T-cell (primary cell): ENCODE measurements at regions of chr7 and their contacts with region 1.

Region 1: GRCh38 chr7:149662591-149663095 is 110.7 kb downstream of the ZNF467 start:
- DNase-seq: peak; percentile 10 to 71 (median 50)
- ATAC-seq: peak; percentile 66 to 79 (median 71)
- H3K4me3 ChIP-seq: no peak overlapping the region
- H3K4me3 Mint-ChIP-seq: no peak overlapping the region
- H3K27ac ChIP-seq: no peak overlapping the region
- H3K27ac Mint-ChIP-seq: no peak overlapping the region
- H3K4me1 ChIP-seq: no peaks in the 10 kb centered on the region
- H3K4me1 Mint-ChIP-seq: no peaks in the 10 kb centered on the region
- H3K27me3 ChIP-seq: peaks cover 0 to 14% of the 10 kb centered on the region in 2 experiments
- H3K27me3 Mint-ChIP-seq: peaks cover 45 to 48% of the 10 kb centered on the region in 2 donors

Region 2: DNA sequence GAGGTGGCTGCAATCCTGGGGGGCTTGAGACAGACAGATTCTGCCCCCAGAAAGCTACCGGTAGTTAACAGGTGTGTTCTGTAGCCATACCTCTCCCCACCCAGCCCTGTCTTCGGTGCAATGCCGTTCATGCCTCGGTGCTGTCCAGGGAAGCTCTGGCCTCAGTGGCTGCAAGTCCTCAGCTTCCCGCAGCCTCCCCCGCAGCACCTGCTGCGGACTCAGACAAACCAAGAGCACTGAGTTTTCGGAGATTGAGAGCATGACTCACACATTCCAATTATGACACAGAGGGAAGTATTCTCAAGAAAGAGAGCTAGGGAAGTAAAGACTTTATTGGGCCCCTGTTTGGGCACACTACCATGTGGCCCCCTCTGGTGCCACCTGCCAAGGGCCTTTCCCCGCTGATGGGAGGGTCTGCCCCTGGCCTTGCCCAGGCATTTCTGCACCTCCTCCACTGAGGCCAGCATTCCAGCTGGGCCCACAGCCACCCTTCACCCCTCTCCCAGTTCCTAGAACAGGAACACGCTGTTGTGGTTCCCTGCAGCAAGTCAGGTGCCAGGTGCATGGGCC is 748.4 kb before region 1 on chr7:
- CTCF ChIA-PET with region 1: no interaction called
- POLR2A ChIA-PET with region 1: no interaction called
- DNase-seq: peak in 2 of 35 experiments; percentile 9 to 14
- ATAC-seq: peak in 3 of 4 experiments; percentile 27 to 35 (median 28)
- H3K4me3 ChIP-seq: no peak overlapping the region
- H3K4me3 Mint-ChIP-seq: peak overlapping the region; percentile 34 to 77 (median 44)
- H3K27ac ChIP-seq: peak overlapping the region; percentile 66
- H3K27ac Mint-ChIP-seq: peak overlapping the region; percentile 77 to 86
- H3K4me1 ChIP-seq: peaks cover 38 to 39% of the 10 kb centered on the region in 2 experiments
- H3K4me1 Mint-ChIP-seq: peaks cover 50 to 61% (median 53%) of the 10 kb centered on the region in 3 donors
- H3K27me3 ChIP-seq: peaks cover 0 to 3% of the 10 kb centered on the region in 2 experiments
- H3K27me3 Mint-ChIP-seq: no peaks in the 10 kb centered on the region

Region 3: GRCh38 chr7:149686002-149686401 is 23.4 kb after region 1 on chr7:
- CTCF ChIA-PET with region 1: no interaction called
- POLR2A ChIA-PET with region 1: no interaction called
- DNase-seq: no peak
- ATAC-seq: no peak
- H3K4me3 ChIP-seq: no peak overlapping the region
- H3K4me3 Mint-ChIP-seq: no peak overlapping the region
- H3K27ac ChIP-seq: no peak overlapping the region
- H3K27ac Mint-ChIP-seq: no peak overlapping the region
- H3K4me1 ChIP-seq: no peaks in the 10 kb centered on the region
- H3K4me1 Mint-ChIP-seq: peaks cover 0 to 4% (median 0%) of the 10 kb centered on the region in 3 donors
- H3K27me3 ChIP-seq: peaks cover 12 to 20% of the 10 kb centered on the region in 2 experiments
- H3K27me3 Mint-ChIP-seq: peaks cover 60 to 64% of the 10 kb centered on the region in 2 donors

Region 4: GRCh38 chr7:149742075-149742701 is 79.5 kb after region 1 on chr7:
- CTCF ChIA-PET with region 1: interaction called, 6 to 19 read pairs
- POLR2A ChIA-PET with region 1: no interaction called
- DNase-seq: peak in 30 of 35 experiments; percentile 9 to 70 (median 36)
- ATAC-seq: peak; percentile 65 to 85 (median 76)
- H3K4me3 ChIP-seq: peak overlapping the region; percentile 5 to 53
- H3K4me3 Mint-ChIP-seq: peak overlapping the region; percentile 67 to 84 (median 70)
- H3K27ac ChIP-seq: no peak overlapping the region
- H3K27ac Mint-ChIP-seq: no peak overlapping the region
- H3K4me1 ChIP-seq: peaks cover 2 to 12% of the 10 kb centered on the region in 2 experiments
- H3K4me1 Mint-ChIP-seq: peaks cover 10% of the 10 kb centered on the region in 3 donors
- H3K27me3 ChIP-seq: peaks cover 2 to 59% of the 10 kb centered on the region in 2 experiments
- H3K27me3 Mint-ChIP-seq: peaks cover 36 to 47% of the 10 kb centered on the region in 2 donors